K562 (cell line): ENCODE measurements at regions of chr16 and their contacts with region 1.

Region 1: GRCh38 chr16:85316321-85316919 is 204.1 kb upstream of the CIBAR2 start:
- DNase-seq: peak; percentile 92 to 97 (median 96)
- ATAC-seq: peak; percentile 98
- H3K4me3 ChIP-seq: no peak overlapping the region
- H3K27ac ChIP-seq: no peak overlapping the region
- H3K4me1 ChIP-seq: peaks cover 30 to 77% of the 10 kb centered on the region in 2 experiments
- H3K27me3 ChIP-seq: no peaks in the 10 kb centered on the region
- CTCF ChIP-seq: peak; percentile 95 to 99 (median 98)
- EP300 ChIP-seq: peak; percentile 12; the same call in 1 of the 2 replicates
- POLR2A ChIP-seq: no peak
- RAD21 ChIP-seq: peak; percentile 85 to 94

Region 2: DNA sequence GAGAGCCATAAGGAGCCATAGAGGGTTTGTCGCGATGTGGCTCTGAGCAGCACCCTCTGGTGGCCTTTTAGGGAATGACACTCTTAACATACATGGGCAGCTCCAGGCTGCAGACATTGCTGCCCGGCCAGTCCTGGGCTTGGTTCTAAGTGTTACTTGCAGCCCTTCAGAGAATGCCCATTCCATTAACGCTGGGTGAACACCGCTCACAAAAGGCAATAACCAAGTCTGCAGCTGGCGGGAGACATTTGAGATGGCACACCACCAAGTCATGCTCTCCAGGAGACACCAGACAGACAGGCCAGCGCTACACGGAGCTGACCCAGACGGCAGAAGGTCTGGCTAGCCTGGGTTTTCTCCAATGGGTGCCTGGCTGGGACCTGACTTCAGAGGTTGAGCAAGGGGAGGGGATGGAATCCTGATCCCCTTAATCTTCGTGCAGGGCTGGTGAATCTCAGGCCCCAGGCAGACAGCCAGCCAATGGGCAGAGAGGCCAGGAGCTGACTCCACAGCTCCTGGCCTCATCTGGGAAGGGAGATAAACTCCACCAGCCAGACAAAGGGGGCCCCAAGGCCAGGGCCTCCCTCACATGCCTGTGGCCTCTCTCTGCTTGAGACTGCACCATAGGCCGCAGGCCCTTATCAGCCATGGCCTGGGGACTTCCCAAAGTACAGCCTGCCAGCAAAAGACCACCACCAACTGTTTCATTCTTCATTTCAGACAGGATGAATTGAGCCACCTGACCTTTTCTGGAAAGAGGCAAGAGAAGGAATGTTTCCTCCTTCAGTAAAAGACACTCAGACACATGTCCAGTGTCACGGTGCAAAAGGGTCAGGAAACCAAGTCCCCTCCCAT is 363.9 kb before region 1 on chr16:
- CTCF ChIA-PET with region 1: no interaction called
- POLR2A ChIA-PET with region 1: no interaction called
- in situ Hi-C with region 1: no loop called
- intact Hi-C with region 1: no loop called
- DNase-seq: peak; percentile 90 to 99 (median 94)
- ATAC-seq: peak; percentile 95
- H3K4me3 ChIP-seq: no peak overlapping the region
- H3K27ac ChIP-seq: peak overlapping the region; percentile 67
- H3K4me1 ChIP-seq: peaks cover 21 to 56% of the 10 kb centered on the region in 2 experiments
- H3K27me3 ChIP-seq: no peaks in the 10 kb centered on the region
- CTCF ChIP-seq: peak; percentile 91 to 98 (median 93)
- EP300 ChIP-seq: peak; percentile 94
- POLR2A ChIP-seq: no peak
- RAD21 ChIP-seq: peak; percentile 83 to 88

Region 3: DNA sequence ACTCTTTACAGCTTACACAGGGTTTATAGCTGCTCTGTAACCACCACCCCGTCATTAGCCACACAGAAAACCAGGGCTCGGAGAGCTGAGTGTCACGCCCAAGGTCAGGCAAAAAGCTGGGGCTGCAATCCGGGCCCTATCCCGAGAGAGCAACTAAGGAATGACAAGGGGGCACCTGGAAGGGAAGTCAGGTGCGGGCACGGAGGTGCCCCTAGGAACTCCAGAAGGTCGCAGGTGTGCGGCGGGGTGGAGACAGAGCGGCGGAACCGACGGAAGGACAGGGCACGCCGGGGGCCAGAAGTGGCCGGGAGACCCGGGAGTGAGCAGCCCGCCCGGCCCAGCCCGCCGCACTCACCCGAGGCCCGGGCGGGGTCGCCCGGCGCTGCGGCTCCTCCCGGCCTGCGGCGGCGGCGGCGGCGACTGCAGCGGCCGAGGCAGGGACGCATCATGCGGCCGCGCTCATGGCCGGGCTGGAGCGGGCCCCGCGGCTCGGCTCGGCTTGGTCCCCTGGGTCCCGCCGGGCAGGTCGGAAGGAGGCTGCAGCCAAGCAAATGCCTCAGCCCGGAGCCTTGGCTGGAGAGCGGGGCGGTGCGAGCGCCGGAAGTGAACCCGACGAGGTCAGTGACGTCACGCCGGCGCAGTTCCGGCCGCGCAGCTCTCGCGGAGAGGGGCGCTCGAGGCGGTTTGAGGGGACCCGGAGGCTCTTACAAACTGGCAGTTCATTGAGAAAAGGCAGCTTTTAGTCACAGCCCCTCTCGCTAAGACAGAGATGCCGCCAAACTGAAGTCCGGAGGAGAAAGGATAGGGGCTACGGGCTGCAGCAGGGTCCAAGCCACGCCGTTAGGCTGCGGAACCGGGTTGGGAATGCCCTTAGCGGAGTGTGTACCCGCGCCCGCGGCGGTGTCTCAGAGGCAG is 305.2 kb before region 1 on chr16 and contains the start of gene ZDHHC7:
- CTCF ChIA-PET with region 1: no interaction called
- POLR2A ChIA-PET with region 1: no interaction called
- in situ Hi-C with region 1: no loop called
- intact Hi-C with region 1: no loop called
- DNase-seq: peak; percentile 93 to 95 (median 94)
- ATAC-seq: peak; percentile 92
- H3K4me3 ChIP-seq: peak within 1 kb of the TSS; percentile 97
- H3K27ac ChIP-seq: peak within 1 kb of the TSS; percentile 98
- H3K4me1 ChIP-seq: peaks cover 7 to 18% of the 10 kb centered on the region in 2 experiments
- H3K27me3 ChIP-seq: no peaks in the 10 kb centered on the region
- CTCF ChIP-seq: peak in 2 of 3 experiments; percentile 15 to 35; a peak in 4 of 6 replicates
- EP300 ChIP-seq: peak; percentile 16; the same call in 1 of the 2 replicates
- POLR2A ChIP-seq: peak; percentile 99
- RAD21 ChIP-seq: peak; percentile 9 to 30; a peak in 3 of 4 replicates
- polyA plus RNA-seq, gene ZDHHC7: 1.7 to 1.8 TPM

Region 4: DNA sequence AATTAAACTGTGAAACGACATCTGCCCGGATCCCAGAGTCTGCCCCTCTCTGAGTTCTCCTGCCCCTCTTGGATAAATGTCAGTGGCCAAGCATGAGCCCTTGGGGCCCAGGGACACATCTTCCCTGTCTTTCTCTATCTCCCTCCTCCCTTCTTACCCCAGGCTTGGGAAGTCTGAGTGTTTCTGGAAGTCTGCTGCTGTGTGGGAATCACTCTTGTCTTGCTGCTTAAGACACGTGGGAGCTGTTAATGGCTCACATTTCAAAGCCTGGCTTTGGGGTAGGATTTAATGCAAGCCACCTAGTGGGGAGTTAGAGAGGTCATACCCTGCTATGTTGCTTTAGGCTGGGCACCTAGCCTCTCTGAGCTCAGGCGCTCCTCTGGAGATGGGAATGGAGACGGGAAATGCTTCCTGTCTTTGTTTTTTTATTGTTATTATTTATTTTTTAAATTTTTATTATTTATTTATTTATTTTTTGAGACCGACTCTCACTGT is 14.3 kb after region 1 on chr16:
- CTCF ChIA-PET with region 1: no interaction called
- POLR2A ChIA-PET with region 1: interaction called, 12 read pairs
- in situ Hi-C with region 1: no loop called
- intact Hi-C with region 1: loop called (anchors 2 kb)
- DNase-seq: peak; percentile 81 to 89 (median 86)
- ATAC-seq: peak; percentile 74
- H3K4me3 ChIP-seq: no peak overlapping the region
- H3K27ac ChIP-seq: peak overlapping the region; percentile 62; the same call in 2 of the 3 replicates
- H3K4me1 ChIP-seq: peaks cover 67 to 80% of the 10 kb centered on the region in 2 experiments
- H3K27me3 ChIP-seq: no peaks in the 10 kb centered on the region
- CTCF ChIP-seq: peak; percentile 76 to 79 (median 76)
- EP300 ChIP-seq: no peak
- POLR2A ChIP-seq: no peak
- RAD21 ChIP-seq: peak; percentile 58 to 65

Region 5: GRCh38 chr16:85393674-85394483 is 77.5 kb after region 1 on chr16:
- CTCF ChIA-PET with region 1: no interaction called
- POLR2A ChIA-PET with region 1: no interaction called
- in situ Hi-C with region 1: no loop called
- intact Hi-C with region 1: loop called (anchors 5 kb)
- DNase-seq: peak; percentile 86 to 94 (median 93)
- ATAC-seq: peak; percentile 87
- H3K4me3 ChIP-seq: no peak overlapping the region
- H3K27ac ChIP-seq: 0 out of 3 replicates have a peak overlapping the region, but pooled peaks have one; percentile 11
- H3K4me1 ChIP-seq: peaks cover 48 to 77% of the 10 kb centered on the region in 2 experiments
- H3K27me3 ChIP-seq: no peaks in the 10 kb centered on the region
- CTCF ChIP-seq: peak; percentile 83 to 96 (median 95)
- EP300 ChIP-seq: no peak
- POLR2A ChIP-seq: no peak
- RAD21 ChIP-seq: peak; percentile 63 to 80